MCF 10A (cell line): ENCODE measurements at regions of chr1 and their contacts with region 1.

Region 1: GRCh38 chr1:206982216-206982615 is 12.0 kb upstream of the FCAMR start:
- DNase-seq: peak; percentile 81
- H3K4me3 Mint-ChIP-seq: no peak overlapping the region
- H3K27ac Mint-ChIP-seq: no peak overlapping the region
- H3K4me1 Mint-ChIP-seq: no peaks in the 10 kb centered on the region
- H3K27me3 Mint-ChIP-seq: no peaks in the 10 kb centered on the region
- CTCF ChIP-seq: peak; percentile 99

Region 2: GRCh38 chr1:206583707-206584648 is 398.2 kb before region 1 on chr1:
- CTCF ChIA-PET with region 1: interaction called, 15 read pairs
- POLR2A ChIA-PET with region 1: interaction called, 3 read pairs
- intact Hi-C with region 1: no loop called
- DNase-seq: peak; percentile 90
- H3K4me3 Mint-ChIP-seq: no peak overlapping the region
- H3K27ac Mint-ChIP-seq: no peak overlapping the region
- H3K4me1 Mint-ChIP-seq: peaks cover 20% of the 10 kb centered on the region
- H3K27me3 Mint-ChIP-seq: no peaks in the 10 kb centered on the region
- CTCF ChIP-seq: peak; percentile 99

Region 3: DNA sequence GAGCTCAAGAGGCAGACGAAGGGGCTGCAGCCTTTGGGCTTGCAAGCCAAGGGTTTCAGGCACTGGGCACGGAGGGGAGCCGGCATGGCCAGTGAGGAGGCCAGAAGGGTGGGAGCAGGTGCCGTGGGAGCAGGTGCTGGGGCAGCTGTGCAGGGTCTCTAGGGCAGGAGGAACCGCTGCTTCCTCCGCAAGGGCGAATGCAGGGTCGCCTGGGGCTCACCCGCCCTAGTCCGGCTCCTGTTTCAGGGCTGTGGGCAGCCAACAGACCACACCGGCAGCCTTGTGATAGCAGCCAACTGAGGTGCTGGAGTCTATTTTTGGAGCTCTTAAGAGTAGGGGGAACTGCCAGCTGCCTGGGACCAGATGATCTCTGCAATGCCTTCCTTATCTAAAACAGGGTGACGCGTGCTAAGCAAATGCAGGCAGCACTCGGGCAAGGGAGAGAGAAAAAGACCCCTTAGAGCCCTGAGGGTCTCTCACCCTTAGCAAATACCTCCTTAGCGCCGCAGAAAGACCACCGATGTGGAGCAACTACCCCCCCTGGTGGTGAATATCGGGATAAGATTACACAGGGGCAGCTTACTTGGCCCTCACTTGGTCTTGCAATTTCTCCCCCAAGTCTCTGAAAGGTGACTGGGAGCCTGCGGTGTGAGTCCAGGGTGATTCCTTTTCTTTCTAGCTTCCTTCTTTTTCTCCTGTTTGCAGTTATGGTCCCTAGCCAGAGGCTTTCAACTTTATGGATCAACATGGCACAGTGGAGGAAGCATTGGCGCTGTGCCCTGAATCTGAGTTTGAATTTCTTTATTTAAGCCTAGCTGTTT is 318.2 kb before region 1 on chr1:
- CTCF ChIA-PET with region 1: interaction called, 54 read pairs
- POLR2A ChIA-PET with region 1: no interaction called
- intact Hi-C with region 1: no loop called
- DNase-seq: peak; percentile 86
- H3K4me3 Mint-ChIP-seq: no peak overlapping the region
- H3K27ac Mint-ChIP-seq: no peak overlapping the region
- H3K4me1 Mint-ChIP-seq: peaks cover 12% of the 10 kb centered on the region
- H3K27me3 Mint-ChIP-seq: peaks cover 26% of the 10 kb centered on the region
- CTCF ChIP-seq: peak; percentile 99

Region 4: GRCh38 chr1:206766251-206766856 is 215.9 kb before region 1 on chr1:
- CTCF ChIA-PET with region 1: interaction called, 22 read pairs
- POLR2A ChIA-PET with region 1: interaction called, 3 read pairs
- intact Hi-C with region 1: no loop called
- DNase-seq: peak; percentile 29
- H3K4me3 Mint-ChIP-seq: no peak overlapping the region
- H3K27ac Mint-ChIP-seq: no peak overlapping the region
- H3K4me1 Mint-ChIP-seq: no peaks in the 10 kb centered on the region
- H3K27me3 Mint-ChIP-seq: peaks cover 32% of the 10 kb centered on the region
- CTCF ChIP-seq: no peak

Region 5: DNA sequence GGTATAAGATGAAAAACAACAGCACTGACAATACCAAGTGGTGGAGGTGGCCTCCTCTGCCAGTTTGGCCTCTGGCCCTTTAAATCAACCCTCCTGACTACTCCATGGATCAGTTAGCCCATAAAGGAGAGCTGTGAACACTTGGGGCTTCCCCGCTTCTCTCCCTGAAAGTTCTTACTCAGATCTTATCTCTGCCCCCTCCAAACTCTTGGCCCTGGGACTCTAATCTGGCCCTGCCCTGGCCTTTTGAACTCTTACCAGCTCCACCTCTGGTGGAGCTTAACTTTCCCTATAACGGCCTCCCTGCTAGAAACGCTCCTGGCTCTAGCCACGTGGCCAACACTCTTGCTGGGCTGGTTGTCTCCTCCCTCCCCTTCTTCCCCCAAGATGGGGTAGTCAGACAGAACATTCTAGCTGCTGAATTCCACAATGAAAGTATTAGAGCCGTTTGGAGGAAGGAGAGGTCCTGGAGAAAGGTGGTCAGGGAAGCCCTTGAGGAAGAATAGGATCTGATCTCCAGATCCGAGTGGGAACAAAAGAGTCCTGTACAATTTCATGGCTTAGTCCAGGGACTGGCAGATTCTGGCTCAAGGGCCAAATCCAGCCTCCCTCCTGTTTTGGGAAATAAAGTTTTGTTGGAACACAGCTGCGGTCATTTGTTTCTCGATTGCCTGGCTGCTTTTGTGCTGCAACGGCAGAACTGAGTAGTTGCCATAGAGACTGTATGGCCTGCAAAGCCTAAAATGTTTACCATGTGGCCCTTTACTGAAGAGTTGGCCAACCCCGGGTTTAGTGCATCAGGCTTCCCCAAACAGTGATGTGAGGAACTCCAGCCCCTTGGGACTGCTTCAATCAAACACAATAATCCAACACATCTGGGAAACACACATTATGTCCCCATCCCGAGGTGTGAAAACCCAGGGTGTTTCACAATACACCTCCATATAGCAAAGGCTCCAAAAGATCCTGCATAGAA is 26.5 kb before region 1 on chr1:
- CTCF ChIA-PET with region 1: interaction called, 75 read pairs
- POLR2A ChIA-PET with region 1: interaction called, 4 read pairs
- intact Hi-C with region 1: no loop called
- DNase-seq: no peak
- H3K4me3 Mint-ChIP-seq: no peak overlapping the region
- H3K27ac Mint-ChIP-seq: no peak overlapping the region
- H3K4me1 Mint-ChIP-seq: peaks cover 9% of the 10 kb centered on the region
- H3K27me3 Mint-ChIP-seq: no peaks in the 10 kb centered on the region
- CTCF ChIP-seq: no peak

Region 6: DNA sequence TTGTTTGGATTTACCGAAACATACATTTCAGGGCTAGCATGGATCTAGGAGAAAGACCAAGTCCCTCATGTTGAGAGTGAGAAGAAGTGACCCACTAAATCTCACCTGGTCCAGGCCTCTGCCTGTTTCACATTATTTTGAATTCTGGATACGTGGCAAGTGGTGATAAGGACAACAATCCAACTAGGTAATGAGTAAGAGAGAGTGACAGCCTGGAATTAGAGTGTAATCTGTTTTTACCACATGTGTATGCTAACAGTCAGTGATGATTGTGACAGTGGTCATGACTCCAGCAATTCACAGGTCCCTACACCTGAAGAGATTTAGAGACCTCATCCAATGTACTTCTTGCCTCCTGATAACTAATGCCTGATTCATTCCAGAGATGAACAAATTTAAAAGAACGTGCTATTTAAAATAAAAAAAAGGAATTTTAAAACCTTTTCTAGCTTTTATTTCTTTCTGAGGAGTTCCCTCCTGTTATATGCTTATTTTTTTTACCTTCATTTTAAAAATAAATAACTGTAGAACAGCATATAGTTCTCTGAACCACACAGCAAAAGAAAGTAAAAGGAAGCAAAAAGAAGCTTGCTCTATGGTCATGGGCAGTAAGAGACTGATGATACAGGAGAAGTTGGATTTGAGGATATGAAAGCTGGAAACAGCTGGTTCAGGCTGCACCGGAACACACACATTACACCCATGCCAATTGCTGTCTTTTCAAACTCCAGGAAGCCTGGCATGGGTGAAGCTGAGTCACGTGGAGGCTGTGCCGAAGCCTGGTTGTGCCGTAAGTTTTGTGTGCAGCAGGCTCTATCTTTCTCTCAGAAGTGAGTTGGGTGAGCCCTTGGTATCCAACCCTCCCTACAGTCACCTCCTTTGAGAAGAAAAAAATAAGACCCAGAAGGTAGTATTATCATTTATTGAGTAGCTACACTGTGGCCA is 35.7 kb after region 1 on chr1:
- CTCF ChIA-PET with region 1: interaction called, 23 read pairs
- POLR2A ChIA-PET with region 1: interaction called, 5 read pairs
- intact Hi-C with region 1: no loop called
- DNase-seq: peak; percentile 89
- H3K4me3 Mint-ChIP-seq: no peak overlapping the region
- H3K27ac Mint-ChIP-seq: peak overlapping the region; percentile 60
- H3K4me1 Mint-ChIP-seq: peaks cover 49% of the 10 kb centered on the region
- H3K27me3 Mint-ChIP-seq: no peaks in the 10 kb centered on the region
- CTCF ChIP-seq: no peak

Region 7: GRCh38 chr1:207565546-207566358 is 583.5 kb after region 1 on chr1:
- CTCF ChIA-PET with region 1: no interaction called
- POLR2A ChIA-PET with region 1: no interaction called
- intact Hi-C with region 1: no loop called
- DNase-seq: peak; percentile 65
- H3K4me3 Mint-ChIP-seq: no peak overlapping the region
- H3K27ac Mint-ChIP-seq: no peak overlapping the region
- H3K4me1 Mint-ChIP-seq: no peaks in the 10 kb centered on the region
- H3K27me3 Mint-ChIP-seq: peaks cover 32% of the 10 kb centered on the region
- CTCF ChIP-seq: peak; percentile 59